ENCODE measurements at regions of chr1 and their contacts with region 1.

Region 1: DNA sequence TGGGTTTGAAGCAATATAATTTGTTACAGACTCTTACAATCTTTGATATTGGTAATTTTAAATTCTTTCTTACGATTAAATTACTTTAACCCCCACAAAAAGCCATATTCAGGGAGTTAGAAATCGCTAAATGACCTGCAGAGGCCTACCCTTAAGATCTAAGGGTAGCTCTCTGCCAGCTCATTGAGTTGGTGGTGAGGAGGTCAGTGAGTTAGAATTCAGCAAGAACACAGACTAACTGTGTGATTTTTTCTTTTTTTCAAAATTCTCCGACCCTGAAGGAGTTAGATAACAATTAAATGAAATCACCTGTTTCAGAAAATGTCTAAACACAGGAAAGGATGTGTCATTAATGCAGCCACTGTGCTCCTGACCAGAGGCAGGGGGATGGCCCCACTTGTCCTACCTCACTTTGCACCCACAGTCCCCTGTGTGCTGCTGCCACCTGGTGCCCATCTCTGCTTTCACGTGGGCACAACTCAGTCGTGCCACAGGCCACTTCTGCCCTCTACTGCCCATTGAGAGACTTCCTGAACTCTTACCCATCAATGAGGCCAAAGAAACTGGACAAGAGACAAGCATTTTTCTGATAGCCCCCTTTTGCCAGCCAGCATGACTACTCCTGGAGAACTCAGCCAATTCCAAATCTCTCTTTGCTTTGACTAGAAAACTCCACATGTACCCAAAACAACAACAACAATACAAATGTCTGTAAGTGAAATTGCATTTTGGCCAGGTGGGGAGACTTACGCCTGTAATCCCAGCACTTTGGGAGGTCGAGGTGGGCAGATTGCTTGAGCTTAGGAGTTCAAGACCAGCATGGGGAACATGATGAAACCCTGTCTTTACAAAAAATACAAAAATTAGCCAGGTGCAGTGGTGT is 8.4 kb downstream of the CFAP45 start:
- DNase-seq: peak; percentile 91
- ATAC-seq: peak; percentile 84
- H3K4me3 ChIP-seq: no peak overlapping the region
- H3K27ac ChIP-seq: no peak overlapping the region
- H3K4me1 ChIP-seq: peaks cover 13% of the 10 kb centered on the region
- H3K27me3 ChIP-seq: no peaks in the 10 kb centered on the region
- CTCF ChIP-seq: peak; percentile 100; the same call in 1 of the 2 replicates
- POLR2A ChIP-seq: peak; percentile 74
- RAD21 ChIP-seq: peak; percentile 100

Region 2: DNA sequence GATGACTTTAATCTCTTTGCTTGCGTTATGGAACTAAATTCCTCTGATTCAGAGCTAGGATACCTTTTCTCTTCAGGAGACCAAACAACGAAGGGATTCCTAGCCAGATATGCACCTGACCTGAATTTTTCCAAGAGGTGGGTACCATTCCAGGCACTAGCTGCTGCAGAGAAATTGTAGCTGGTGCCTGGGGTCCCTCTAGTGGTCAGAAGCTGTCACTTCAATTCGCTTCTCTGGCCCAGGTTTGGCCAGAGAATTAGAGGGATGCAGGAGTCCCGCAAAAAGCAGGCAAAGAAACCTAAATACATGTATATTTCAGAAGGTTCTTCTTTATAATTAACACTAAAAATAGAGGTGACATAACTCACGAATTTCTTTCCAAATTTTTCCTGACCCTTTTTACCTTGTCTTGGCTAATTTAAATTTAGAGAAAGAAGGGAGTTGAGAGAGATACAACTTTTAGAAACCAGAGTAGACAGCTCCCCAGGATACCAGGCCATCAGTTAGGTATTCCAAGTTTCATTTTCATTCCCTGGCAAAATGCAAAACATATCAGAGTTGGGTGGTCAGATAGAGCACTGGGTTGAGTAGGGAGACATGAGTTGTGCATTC is 677.3 kb before region 1 on chr1:
- CTCF ChIA-PET with region 1: no interaction called
- POLR2A ChIA-PET with region 1: no interaction called
- dilution Hi-C with region 1: no loop called
- in situ Hi-C with region 1: loop called (anchors 25 kb)
- intact Hi-C with region 1: loop called (anchors 2 kb)
- DNase-seq: peak; percentile 28
- ATAC-seq: peak; percentile 87
- H3K4me3 ChIP-seq: no peak overlapping the region
- H3K27ac ChIP-seq: no peak overlapping the region
- H3K4me1 ChIP-seq: no peaks in the 10 kb centered on the region
- H3K27me3 ChIP-seq: peaks cover 2% of the 10 kb centered on the region; the same call in 1 of the 2 replicates
- CTCF ChIP-seq: peak; percentile 74
- POLR2A ChIP-seq: no peak
- RAD21 ChIP-seq: peak; percentile 57

Region 3: GRCh38 chr1:159798893-159799292 is 92.6 kb before region 1 on chr1:
- CTCF ChIA-PET with region 1: interaction called, 150 read pairs
- POLR2A ChIA-PET with region 1: interaction called, 3 read pairs
- dilution Hi-C with region 1: loop called (anchors 25 kb)
- in situ Hi-C with region 1: loop called (anchors 5 kb)
- intact Hi-C with region 1: loop called (anchors 1 kb)
- DNase-seq: peak; percentile 85
- ATAC-seq: peak; percentile 99
- H3K4me3 ChIP-seq: no peak overlapping the region
- H3K27ac ChIP-seq: no peak overlapping the region
- H3K4me1 ChIP-seq: no peaks in the 10 kb centered on the region
- H3K27me3 ChIP-seq: peaks cover 38% of the 10 kb centered on the region
- CTCF ChIP-seq: peak; percentile 82
- POLR2A ChIP-seq: no peak
- RAD21 ChIP-seq: peak; percentile 91

Region 4: GRCh38 chr1:159829822-159830465 is 61.6 kb before region 1 on chr1:
- CTCF ChIA-PET with region 1: interaction called, 10 read pairs
- POLR2A ChIA-PET with region 1: no interaction called
- dilution Hi-C with region 1: no loop called
- in situ Hi-C with region 1: no loop called
- intact Hi-C with region 1: no loop called
- DNase-seq: peak; percentile 81
- ATAC-seq: peak; percentile 80
- H3K4me3 ChIP-seq: no peak overlapping the region
- H3K27ac ChIP-seq: no peak overlapping the region
- H3K4me1 ChIP-seq: peaks cover 2% of the 10 kb centered on the region
- H3K27me3 ChIP-seq: no peaks in the 10 kb centered on the region; the same call in 1 of the 2 replicates
- CTCF ChIP-seq: no peak
- POLR2A ChIP-seq: no peak
- RAD21 ChIP-seq: no peak

Region 5: GRCh38 chr1:159924981-159925712 is 33.6 kb after region 1 on chr1 and contains the start of gene TAGLN2:
- CTCF ChIA-PET with region 1: interaction called, 3 read pairs
- POLR2A ChIA-PET with region 1: no interaction called
- dilution Hi-C with region 1: no loop called
- in situ Hi-C with region 1: no loop called
- intact Hi-C with region 1: loop called (anchors 2 kb)
- DNase-seq: peak; percentile 90
- ATAC-seq: peak; percentile 82
- H3K4me3 ChIP-seq: peak within 1 kb of the TSS; percentile 83
- H3K27ac ChIP-seq: peak within 1 kb of the TSS; percentile 90
- H3K4me1 ChIP-seq: peaks cover 15% of the 10 kb centered on the region
- H3K27me3 ChIP-seq: no peaks in the 10 kb centered on the region
- CTCF ChIP-seq: no peak
- POLR2A ChIP-seq: peak; percentile 97
- RAD21 ChIP-seq: no peak
- total RNA-seq, gene TAGLN2: 365 and 440 TPM in 2 replicates

Region 6: DNA sequence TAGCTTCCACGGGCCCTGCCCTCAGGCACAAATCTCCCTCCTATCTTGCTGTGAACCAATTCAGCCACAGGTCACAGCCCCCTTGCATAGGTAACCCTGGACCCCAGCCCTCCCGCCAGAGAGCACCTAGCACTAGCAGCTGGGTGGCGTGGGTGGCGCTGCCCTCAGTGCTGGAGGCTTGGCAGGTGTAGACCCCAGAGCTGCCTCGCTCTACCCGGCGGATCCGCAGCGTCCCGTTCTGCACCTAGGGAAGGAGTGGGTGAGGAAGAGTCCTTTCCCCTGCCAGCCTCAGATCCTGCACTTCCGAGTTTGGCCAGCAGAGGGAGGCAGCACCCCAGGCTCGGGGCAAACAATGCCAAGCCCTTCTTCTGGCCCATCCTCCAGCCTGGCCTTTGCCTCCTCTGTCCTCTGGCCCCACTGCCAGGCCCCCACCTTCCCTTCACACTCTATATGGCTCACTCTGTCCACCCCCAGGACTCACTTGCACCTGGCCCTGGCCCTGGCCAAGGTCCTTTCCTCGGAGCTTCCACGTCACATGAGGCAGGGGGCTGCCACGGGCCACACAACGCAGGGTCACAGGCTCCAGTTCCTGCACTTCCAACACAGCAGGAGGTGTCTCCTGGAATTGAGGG is 44.9 kb after region 1 on chr1:
- CTCF ChIA-PET with region 1: no interaction called
- POLR2A ChIA-PET with region 1: no interaction called
- dilution Hi-C with region 1: no loop called
- in situ Hi-C with region 1: no loop called
- intact Hi-C with region 1: no loop called
- DNase-seq: no peak
- ATAC-seq: peak; percentile 98
- H3K4me3 ChIP-seq: no peak overlapping the region
- H3K27ac ChIP-seq: no peak overlapping the region
- H3K4me1 ChIP-seq: no peaks in the 10 kb centered on the region
- H3K27me3 ChIP-seq: peaks cover 38% of the 10 kb centered on the region
- CTCF ChIP-seq: peak; percentile 93
- POLR2A ChIP-seq: no peak
- RAD21 ChIP-seq: peak; percentile 94

Region 7: DNA sequence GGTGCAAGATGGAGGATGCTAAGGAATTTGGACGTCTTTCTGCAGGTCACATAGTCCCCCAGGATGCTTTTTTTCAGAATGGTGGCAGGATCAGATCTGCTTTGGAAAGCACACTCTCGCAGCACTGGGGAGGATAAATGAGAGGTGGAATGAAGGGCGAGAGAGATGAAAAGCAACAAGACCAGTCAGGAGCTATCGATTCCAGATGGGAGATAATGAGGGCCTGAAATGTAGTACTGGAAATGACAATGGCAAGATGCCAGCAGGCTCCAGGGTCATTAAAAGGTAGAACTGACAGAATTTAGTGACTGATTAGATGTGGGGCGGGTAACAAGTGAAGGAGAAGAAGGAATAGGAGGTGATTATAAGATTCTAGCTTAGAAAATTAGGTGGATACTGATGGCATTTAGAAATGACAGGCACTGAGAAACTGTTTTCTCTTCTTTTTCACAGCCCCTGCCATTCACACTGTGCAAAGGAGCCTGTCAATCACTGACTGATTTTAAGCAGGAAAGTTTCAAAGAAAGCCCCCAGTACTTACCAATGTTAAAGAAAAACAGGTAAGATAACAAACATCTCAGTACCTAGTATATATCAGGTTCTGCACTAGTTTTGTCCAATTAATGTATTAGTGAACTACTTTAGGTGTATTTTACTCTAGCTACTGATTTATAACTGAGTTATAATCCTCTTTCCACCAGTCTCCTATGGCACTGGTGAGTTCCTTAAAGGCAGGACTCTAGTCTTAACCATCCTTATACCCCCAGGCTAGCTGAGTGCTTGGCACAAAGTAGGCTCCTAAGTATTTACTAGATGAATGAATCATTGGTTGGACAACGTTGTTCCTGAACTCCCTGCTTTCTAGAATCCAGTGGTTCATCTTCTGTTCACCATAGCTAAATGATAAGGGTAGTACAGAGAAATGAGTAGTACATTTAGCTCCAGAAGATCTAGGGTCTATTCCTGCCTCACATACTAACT is 131.1 kb after region 1 on chr1:
- CTCF ChIA-PET with region 1: no interaction called
- POLR2A ChIA-PET with region 1: no interaction called
- dilution Hi-C with region 1: no loop called
- in situ Hi-C with region 1: no loop called
- intact Hi-C with region 1: no loop called
- DNase-seq: no peak
- ATAC-seq: no peak
- H3K4me3 ChIP-seq: no peak overlapping the region
- H3K27ac ChIP-seq: no peak overlapping the region
- H3K4me1 ChIP-seq: peaks cover 6% of the 10 kb centered on the region
- H3K27me3 ChIP-seq: peaks cover 13% of the 10 kb centered on the region
- CTCF ChIP-seq: no peak
- POLR2A ChIP-seq: no peak
- RAD21 ChIP-seq: no peak